K562 (cell line): ENCODE measurements at regions of chr10 and their contacts with region 1.

Region 1: DNA sequence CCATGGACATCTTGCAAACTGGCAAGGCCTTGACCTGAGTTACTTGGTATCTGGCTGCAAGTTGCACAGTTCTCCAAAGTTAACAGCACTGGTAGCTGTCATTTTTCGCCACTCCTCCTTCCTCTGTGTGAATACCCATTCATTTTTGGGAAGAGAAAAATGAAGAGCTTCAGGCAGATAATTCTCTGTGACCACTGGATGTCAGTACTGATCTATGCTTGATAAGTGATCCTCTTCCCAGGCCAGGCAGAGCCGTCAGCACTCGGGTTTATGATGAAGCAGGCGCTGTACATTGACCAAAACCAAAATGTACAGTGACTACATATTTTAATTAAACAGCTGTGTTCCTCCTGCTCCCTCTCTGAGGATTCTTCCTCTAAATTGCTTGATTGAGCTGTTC is 55.9 kb upstream of the PDZD8 start:
- DNase-seq: no peak
- ATAC-seq: peak; percentile 69
- H3K4me3 ChIP-seq: no peak overlapping the region
- H3K27ac ChIP-seq: no peak overlapping the region
- H3K4me1 ChIP-seq: peaks cover 4 to 6% of the 10 kb centered on the region in 2 experiments; a peak in 3 of 5 replicates
- H3K27me3 ChIP-seq: no peaks in the 10 kb centered on the region
- CTCF ChIP-seq: peak; percentile 21 to 56 (median 35); a peak in 2 of 6 replicates
- EP300 ChIP-seq: no peak
- POLR2A ChIP-seq: no peak
- RAD21 ChIP-seq: peak; percentile 57 to 59

Region 2: GRCh38 chr10:117300671-117301070 is 130.5 kb before region 1 on chr10:
- CTCF ChIA-PET with region 1: no interaction called
- POLR2A ChIA-PET with region 1: no interaction called
- in situ Hi-C with region 1: no loop called
- intact Hi-C with region 1: no loop called
- DNase-seq: no peak
- ATAC-seq: no peak
- H3K4me3 ChIP-seq: no peak overlapping the region
- H3K27ac ChIP-seq: no peak overlapping the region
- H3K4me1 ChIP-seq: no peaks in the 10 kb centered on the region
- H3K27me3 ChIP-seq: no peaks in the 10 kb centered on the region
- CTCF ChIP-seq: no peak
- EP300 ChIP-seq: no peak
- POLR2A ChIP-seq: no peak
- RAD21 ChIP-seq: no peak

Region 3: GRCh38 chr10:117449636-117450035 is 18.5 kb after region 1 on chr10:
- CTCF ChIA-PET with region 1: interaction called, 3 read pairs
- POLR2A ChIA-PET with region 1: no interaction called
- in situ Hi-C with region 1: no loop called
- intact Hi-C with region 1: loop called (anchors 1 kb)
- DNase-seq: peak; percentile 28 to 53 (median 36)
- ATAC-seq: peak; percentile 82
- H3K4me3 ChIP-seq: no peak overlapping the region
- H3K27ac ChIP-seq: no peak overlapping the region
- H3K4me1 ChIP-seq: no peaks in the 10 kb centered on the region
- H3K27me3 ChIP-seq: no peaks in the 10 kb centered on the region
- CTCF ChIP-seq: peak; percentile 62 to 72 (median 67)
- EP300 ChIP-seq: no peak
- POLR2A ChIP-seq: no peak
- RAD21 ChIP-seq: peak in 1 of 2 experiments; percentile 63; a peak in 2 of 4 replicates